Heart left ventricle (tissue), 16 donors: ENCODE measurements at regions of chr3 and their contacts with region 1.

Region 1: DNA sequence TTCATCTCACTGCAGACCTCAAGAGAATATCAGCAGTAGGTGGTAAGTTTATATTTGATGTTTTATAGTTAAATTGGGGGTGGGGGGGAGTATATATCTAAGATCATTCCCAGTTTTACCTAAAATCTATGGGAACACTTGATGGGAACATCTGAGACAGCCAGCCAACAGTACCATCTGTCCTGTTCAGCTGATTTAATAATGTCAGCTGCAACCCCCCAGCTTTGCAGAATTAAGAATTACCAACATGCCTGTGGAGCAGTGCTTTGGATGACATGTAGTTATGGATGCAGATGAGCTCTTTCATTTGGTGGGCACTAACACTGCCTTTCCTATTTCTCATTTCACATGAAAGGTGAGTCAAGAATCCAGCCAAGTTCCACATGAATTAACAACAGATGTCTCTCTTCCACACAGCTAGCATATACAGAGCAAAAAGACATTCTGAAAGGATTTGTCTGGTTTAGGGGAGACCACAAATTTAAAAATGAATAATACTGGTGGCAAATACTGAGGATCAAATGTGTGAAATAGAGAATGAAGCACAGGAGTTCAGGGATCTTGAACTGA is 76.2 kb downstream of the SETD5 start:
- DNase-seq: no peak
- ATAC-seq: no peak
- H3K4me3 ChIP-seq: no peak overlapping the region
- H3K27ac ChIP-seq: no peak overlapping the region
- H3K4me1 ChIP-seq: no peaks in the 10 kb centered on the region
- H3K27me3 ChIP-seq: no peaks in the 10 kb centered on the region
- CTCF ChIP-seq: no peak
- POLR2A ChIP-seq: no peak

Region 2: GRCh38 chr3:9409981-9410854 is 63.4 kb before region 1 on chr3:
- intact Hi-C with region 1: no loop called
- DNase-seq: no peak
- ATAC-seq: no peak
- H3K4me3 ChIP-seq: no peak overlapping the region
- H3K27ac ChIP-seq: peak overlapping the region in 7 of 12 donors; percentile 0 to 50 (median 22)
- H3K4me1 ChIP-seq: peaks cover 6 to 94% (median 72%) of the 10 kb centered on the region in 12 donors
- H3K27me3 ChIP-seq: no peaks in the 10 kb centered on the region
- CTCF ChIP-seq: no peak
- POLR2A ChIP-seq: no peak

Region 3: DNA sequence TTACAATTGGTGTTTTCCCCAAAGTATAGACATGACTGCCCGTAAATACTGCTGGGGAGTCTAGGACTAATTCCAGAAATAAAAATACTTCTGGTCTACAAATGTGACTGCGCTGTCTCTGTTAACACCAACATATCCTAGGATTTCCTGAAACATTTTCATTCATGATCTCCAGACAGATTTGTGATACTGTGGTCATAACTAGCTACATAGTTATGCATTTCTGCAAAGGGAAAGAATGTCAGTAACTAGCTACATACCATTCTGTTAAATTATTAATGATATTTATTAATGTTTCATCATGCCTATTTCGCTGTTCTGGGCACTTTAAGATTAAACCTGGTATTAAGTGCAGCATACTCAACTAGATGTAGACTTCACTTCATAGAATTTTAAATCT is 42.8 kb before region 1 on chr3:
- intact Hi-C with region 1: loop called in 1 of 10 experiments (anchors 5 kb)
- DNase-seq: no peak
- ATAC-seq: no peak
- H3K4me3 ChIP-seq: no peak overlapping the region
- H3K27ac ChIP-seq: no peak overlapping the region
- H3K4me1 ChIP-seq: peaks cover 0 to 23% (median 3%) of the 10 kb centered on the region in 12 donors
- H3K27me3 ChIP-seq: no peaks in the 10 kb centered on the region
- CTCF ChIP-seq: no peak
- POLR2A ChIP-seq: no peak

Region 4: GRCh38 chr3:9676785-9677184 is 203.2 kb after region 1 on chr3:
- intact Hi-C with region 1: no loop called
- DNase-seq: no peak
- ATAC-seq: no peak
- H3K4me3 ChIP-seq: no peak overlapping the region
- H3K27ac ChIP-seq: peak overlapping the region in 4 of 12 donors; percentile 8 to 71 (median 45)
- H3K4me1 ChIP-seq: peaks cover 0 to 70% (median 23%) of the 10 kb centered on the region in 12 donors
- H3K27me3 ChIP-seq: no peaks in the 10 kb centered on the region
- CTCF ChIP-seq: no peak
- POLR2A ChIP-seq: no peak

Region 5: GRCh38 chr3:9970020-9970687 is 496.6 kb after region 1 on chr3:
- intact Hi-C with region 1: loop called in 1 of 10 experiments (anchors 5 kb)
- DNase-seq: no peak
- ATAC-seq: no peak
- H3K4me3 ChIP-seq: no peak overlapping the region
- H3K27ac ChIP-seq: no peak overlapping the region
- H3K4me1 ChIP-seq: no peaks in the 10 kb centered on the region
- H3K27me3 ChIP-seq: no peaks in the 10 kb centered on the region
- CTCF ChIP-seq: no peak
- POLR2A ChIP-seq: no peak